ENCODE measurements at regions of chr9 and their contacts with region 1.

Region 1: DNA sequence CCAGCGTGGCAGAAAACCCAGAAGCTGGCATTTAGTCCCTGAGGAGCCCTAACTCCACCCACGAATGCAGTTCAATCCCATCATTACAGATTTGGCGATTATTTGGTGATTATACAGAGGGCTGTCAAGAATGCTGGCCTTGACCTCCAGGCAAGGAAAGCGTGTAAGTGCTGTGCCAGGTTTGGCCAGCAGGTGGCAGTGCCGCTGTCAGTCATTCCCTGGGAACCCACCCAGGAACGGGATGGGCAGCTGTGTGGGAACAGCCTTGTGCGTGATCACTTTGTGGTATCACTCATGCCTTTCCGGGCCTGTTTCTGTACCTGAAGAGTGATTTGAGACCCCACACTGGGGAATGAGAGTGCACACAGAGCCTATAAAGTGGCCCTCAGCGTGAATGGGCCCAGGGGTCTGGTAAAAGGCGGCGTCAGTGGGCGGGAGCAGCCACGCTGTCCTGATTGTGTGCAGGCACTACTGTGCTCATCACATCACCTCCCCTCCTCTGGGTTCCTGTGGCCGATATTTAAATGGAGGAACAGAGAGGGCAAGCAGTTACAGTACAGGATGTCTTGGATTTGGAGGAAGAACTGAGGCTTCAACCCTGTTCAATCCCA is 215.6 kb downstream of the ROR2 start:
- DNase-seq: peak; percentile 65
- ATAC-seq: no peak
- H3K4me3 Mint-ChIP-seq: no peak overlapping the region
- H3K27ac Mint-ChIP-seq: no peak overlapping the region
- H3K4me1 Mint-ChIP-seq: no peaks in the 10 kb centered on the region
- H3K27me3 Mint-ChIP-seq: peaks cover 2% of the 10 kb centered on the region

Region 2: GRCh38 chr9:91589101-91589553 is 145.3 kb before region 1 on chr9:
- CTCF ChIA-PET with region 1: no interaction called
- POLR2A ChIA-PET with region 1: no interaction called
- DNase-seq: no peak
- ATAC-seq: no peak
- H3K4me3 Mint-ChIP-seq: no peak overlapping the region
- H3K27ac Mint-ChIP-seq: no peak overlapping the region
- H3K4me1 Mint-ChIP-seq: no peaks in the 10 kb centered on the region
- H3K27me3 Mint-ChIP-seq: peaks cover 5% of the 10 kb centered on the region

Region 3: GRCh38 chr9:91718071-91718470 is 16.4 kb before region 1 on chr9:
- CTCF ChIA-PET with region 1: interaction called, 13 read pairs
- POLR2A ChIA-PET with region 1: no interaction called
- DNase-seq: no peak
- ATAC-seq: no peak
- H3K4me3 Mint-ChIP-seq: no peak overlapping the region
- H3K27ac Mint-ChIP-seq: no peak overlapping the region
- H3K4me1 Mint-ChIP-seq: peaks cover 20% of the 10 kb centered on the region
- H3K27me3 Mint-ChIP-seq: peaks cover 60% of the 10 kb centered on the region

Region 4: DNA sequence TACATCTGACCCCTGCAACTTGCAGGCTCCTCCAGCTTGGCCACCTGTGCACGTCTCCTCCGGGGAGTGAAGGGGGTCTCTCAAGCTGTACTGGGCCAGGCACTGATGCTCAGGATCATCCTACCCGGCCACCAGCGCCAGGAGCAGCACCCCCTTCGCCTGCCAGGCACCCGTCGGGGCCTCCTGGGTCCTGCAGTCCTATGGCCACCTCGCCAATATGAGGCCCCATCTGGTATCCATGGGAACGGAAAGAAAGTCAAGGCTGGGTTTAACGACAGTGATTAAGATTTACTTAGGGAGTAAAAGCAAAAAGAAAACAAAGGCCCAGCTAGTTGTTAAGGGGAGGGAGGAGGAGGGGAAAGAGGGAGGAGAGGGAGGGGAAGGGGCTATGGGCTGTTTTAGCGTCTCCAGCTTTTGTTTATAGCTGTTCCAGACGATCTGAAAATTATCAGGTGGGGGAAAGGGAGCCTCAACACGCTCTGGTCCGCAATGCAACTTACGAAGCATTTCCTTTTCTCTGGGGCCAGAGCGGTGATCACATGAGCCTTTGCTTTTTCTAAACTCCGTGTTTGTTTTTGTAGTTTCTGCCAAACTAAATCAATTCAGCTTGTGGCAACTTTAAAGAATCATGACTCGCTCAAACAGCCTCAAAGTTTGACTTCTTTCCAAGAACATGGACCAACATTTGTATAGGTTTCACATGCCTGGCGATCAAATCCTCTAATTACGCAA is 83.2 kb after region 1 on chr9:
- CTCF ChIA-PET with region 1: no interaction called
- POLR2A ChIA-PET with region 1: no interaction called
- DNase-seq: no peak
- ATAC-seq: no peak
- H3K4me3 Mint-ChIP-seq: no peak overlapping the region
- H3K27ac Mint-ChIP-seq: no peak overlapping the region
- H3K4me1 Mint-ChIP-seq: no peaks in the 10 kb centered on the region
- H3K27me3 Mint-ChIP-seq: peaks cover 9% of the 10 kb centered on the region

Measured in activated CD8-positive, alpha-beta T cell treated with anti-CD3 and anti-CD28 coated beads, Interleukin-2, amount 10 ng/mL, durations not matched to agents 7 days and 5 days (primary cell).